ENCODE measurements at regions of chr19 and their contacts with region 1.

Region 1: DNA sequence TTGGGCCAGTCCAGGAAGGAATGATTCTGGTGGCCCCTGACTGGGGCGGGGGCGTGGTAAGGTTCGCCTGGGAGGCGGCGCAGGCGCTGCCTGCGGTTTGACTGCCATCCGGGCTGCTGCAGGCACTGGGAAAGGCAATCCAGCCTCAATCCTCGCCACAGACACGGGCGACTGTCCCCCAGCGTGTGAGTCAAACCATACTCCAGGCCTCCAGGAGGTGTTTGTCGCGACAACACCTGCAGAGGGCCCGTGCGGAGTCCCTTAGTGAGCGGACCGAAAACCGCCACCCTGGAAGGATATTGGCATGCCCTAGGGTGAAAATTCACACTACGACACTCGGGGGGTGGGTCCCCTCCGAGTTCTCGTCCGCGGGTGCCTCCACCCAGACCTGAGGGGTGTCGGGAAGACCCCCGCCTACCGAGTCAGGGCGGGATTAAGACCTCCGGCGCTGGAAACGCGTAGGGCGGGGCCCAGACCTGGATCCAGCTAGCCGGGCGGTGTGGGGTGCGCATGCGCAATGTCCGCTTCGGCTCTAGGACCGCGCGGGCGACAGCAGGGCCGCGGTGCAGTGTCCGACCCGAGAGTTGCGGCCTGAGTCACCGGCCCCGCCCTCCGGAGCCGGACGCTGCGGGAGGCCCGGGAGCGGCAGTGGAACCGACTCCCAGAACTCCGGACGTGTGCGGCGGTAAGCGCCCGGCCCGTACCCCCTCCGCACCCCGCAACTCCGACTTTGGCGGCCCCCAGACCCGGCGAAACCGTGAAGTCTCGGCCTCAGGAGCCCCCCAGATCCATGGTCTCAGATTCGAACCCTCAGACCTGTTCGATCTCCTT is at the start of gene CAPNS1:
- DNase-seq: peak; percentile 96
- ATAC-seq: peak; percentile 74
- H3K4me3 Mint-ChIP-seq: peak within 1 kb of the TSS; percentile 97
- H3K27ac Mint-ChIP-seq: peak within 1 kb of the TSS; percentile 97
- H3K4me1 Mint-ChIP-seq: peaks cover 26% of the 10 kb centered on the region
- H3K27me3 Mint-ChIP-seq: no peaks in the 10 kb centered on the region
- total RNA-seq, gene CAPNS1: 345 to 452 TPM

Region 2: DNA sequence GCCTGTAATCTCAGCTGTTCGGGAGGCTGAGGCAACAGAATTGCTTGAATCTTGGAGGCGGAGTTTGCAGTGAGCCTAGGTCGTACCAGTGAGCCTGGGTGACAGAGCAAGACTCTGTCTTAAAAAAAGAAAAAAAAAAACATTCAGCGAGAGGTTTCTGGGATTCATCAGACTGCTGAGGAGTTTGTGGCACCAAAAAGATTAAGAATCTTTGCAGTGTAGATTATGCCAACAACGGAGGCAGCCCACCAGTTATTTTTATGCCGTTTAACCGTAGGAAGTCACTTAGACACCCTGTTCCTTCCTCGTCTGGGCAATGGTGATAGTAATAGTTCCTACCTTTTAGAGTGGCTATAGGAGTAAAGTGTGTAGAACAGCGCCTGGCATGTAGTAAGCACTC is 489.1 kb before region 1 on chr19:
- CTCF ChIA-PET with region 1: no interaction called
- POLR2A ChIA-PET with region 1: no interaction called
- intact Hi-C with region 1: no loop called
- DNase-seq: no peak
- ATAC-seq: no peak
- H3K4me3 Mint-ChIP-seq: no peak overlapping the region
- H3K27ac Mint-ChIP-seq: peak overlapping the region; percentile 55
- H3K4me1 Mint-ChIP-seq: peaks cover 26% of the 10 kb centered on the region
- H3K27me3 Mint-ChIP-seq: no peaks in the 10 kb centered on the region

Region 3: GRCh38 chr19:35702223-35703012 is 437.3 kb before region 1 on chr19:
- CTCF ChIA-PET with region 1: no interaction called
- POLR2A ChIA-PET with region 1: no interaction called
- intact Hi-C with region 1: loop called in 1 of 2 experiments (anchors 2 kb)
- DNase-seq: peak; percentile 97
- ATAC-seq: peak; percentile 99
- H3K4me3 Mint-ChIP-seq: peak overlapping the region; percentile 83
- H3K27ac Mint-ChIP-seq: peak overlapping the region; percentile 99
- H3K4me1 Mint-ChIP-seq: peaks cover 8% of the 10 kb centered on the region
- H3K27me3 Mint-ChIP-seq: no peaks in the 10 kb centered on the region

Region 4: DNA sequence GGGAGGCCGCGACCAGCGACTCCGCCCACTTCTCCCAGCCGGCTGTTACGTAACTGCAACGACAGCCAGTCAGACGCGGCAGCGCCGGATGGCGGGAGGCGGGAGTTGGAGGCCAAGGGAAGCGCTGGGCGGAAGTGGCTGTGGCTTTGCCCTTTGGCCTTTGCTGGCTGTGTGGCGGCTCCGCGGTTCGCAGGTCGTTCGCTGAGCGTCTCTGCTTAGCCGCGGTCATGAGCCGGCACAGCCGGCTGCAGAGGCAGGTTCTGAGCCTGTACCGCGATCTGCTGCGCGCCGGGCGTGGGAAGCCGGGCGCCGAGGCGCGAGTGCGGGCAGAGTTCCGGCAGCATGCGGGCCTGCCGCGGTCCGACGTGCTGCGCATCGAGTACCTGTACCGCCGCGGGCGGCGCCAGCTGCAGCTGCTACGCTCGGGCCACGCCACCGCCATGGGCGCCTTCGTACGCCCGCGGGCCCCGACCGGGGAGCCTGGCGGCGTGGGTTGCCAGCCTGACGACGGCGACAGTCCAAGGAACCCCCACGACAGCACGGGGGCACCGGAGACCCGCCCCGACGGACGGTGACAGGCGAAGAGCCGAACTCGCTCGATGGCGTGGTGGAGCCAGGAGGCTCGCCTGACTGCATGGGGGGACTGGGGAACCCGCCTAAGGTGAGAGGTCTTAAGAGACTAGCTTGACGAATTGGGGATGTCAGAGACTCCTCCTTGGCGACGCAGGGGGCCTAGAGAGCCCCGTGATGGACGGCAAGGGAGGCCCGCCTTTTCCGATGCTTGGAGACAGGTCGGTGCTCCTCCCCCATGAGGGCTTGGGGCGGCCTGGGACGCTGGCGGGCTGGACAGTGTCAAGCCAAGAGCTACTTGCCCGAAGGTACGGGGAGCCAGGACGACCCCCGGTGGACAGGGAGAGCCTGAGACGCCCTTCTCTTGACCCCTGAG is 144.4 kb before region 1 on chr19 and contains the start of gene SDHAF1:
- CTCF ChIA-PET with region 1: no interaction called
- POLR2A ChIA-PET with region 1: no interaction called
- intact Hi-C with region 1: loop called in 1 of 2 experiments (anchors 1 kb)
- DNase-seq: peak; percentile 98
- ATAC-seq: peak; percentile 85
- H3K4me3 Mint-ChIP-seq: peak within 1 kb of the TSS; percentile 94
- H3K27ac Mint-ChIP-seq: peak within 1 kb of the TSS; percentile 96
- H3K4me1 Mint-ChIP-seq: peaks cover 34% of the 10 kb centered on the region
- H3K27me3 Mint-ChIP-seq: no peaks in the 10 kb centered on the region
- total RNA-seq, gene SDHAF1: 16.0 to 19.2 TPM

Region 5: GRCh38 chr19:36169084-36169760 is 29.5 kb after region 1 on chr19:
- CTCF ChIA-PET with region 1: no interaction called
- POLR2A ChIA-PET with region 1: no interaction called
- intact Hi-C with region 1: loop called (anchors 1 kb)
- DNase-seq: no peak
- ATAC-seq: no peak
- H3K4me3 Mint-ChIP-seq: no peak overlapping the region
- H3K27ac Mint-ChIP-seq: no peak overlapping the region
- H3K4me1 Mint-ChIP-seq: peaks cover 4% of the 10 kb centered on the region
- H3K27me3 Mint-ChIP-seq: no peaks in the 10 kb centered on the region

Region 6: DNA sequence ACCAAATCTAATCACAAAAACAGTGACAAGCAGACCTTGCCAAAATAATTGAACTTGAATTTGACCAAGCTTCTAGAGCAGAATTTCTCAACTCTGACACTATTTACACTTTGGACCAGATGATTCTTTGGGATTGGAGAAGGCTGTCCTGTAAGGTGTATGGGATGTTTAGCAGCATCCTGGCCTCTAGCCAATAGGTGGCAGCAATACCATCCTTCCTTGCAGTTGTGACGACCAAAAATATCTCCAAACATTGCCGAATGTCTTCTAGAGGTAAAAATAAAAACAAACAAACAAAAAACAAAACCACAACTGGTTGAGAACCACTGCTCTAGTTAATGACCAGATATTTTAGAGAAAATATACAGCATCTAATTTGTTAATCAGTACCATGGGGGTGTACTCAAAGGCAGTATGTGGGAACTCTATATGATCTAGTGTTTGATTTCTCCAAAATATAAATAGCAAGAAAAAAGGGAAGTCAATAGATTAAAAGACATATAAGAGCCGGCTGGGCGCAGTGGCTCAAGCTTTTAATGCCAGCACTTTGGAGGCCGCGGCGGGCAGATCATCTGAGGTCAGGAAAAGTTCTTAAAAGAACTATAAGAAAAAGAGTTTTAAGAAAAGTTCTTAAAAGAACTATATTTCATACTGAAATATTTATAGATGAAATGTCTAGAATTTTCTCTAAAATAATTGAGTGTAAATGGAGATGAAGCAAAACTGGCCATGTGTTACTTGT is 1170.3 kb after region 1 on chr19:
- CTCF ChIA-PET with region 1: no interaction called
- POLR2A ChIA-PET with region 1: no interaction called
- intact Hi-C with region 1: loop called in 1 of 2 experiments (anchors 10 kb)
- DNase-seq: peak; percentile 56
- ATAC-seq: no peak
- H3K4me3 Mint-ChIP-seq: no peak overlapping the region
- H3K27ac Mint-ChIP-seq: no peak overlapping the region
- H3K4me1 Mint-ChIP-seq: peaks cover 17% of the 10 kb centered on the region
- H3K27me3 Mint-ChIP-seq: no peaks in the 10 kb centered on the region